Activated T-helper 1 cell treated with anti-CD3 and anti-CD28 coated beads, Interleukin-12 subunit alpha, Interleukin-12 subunit beta, Interleukin-2, Interleukin-4 antibody, amounts not matched to agents 30 ng/mL and 10 ng/mL and 1 ng/mL, durations not matched to agents 14 hours and 24 hours and 36 hours (primary cell): ENCODE measurements at regions of chr17 and their contacts with region 1.

Region 1: DNA sequence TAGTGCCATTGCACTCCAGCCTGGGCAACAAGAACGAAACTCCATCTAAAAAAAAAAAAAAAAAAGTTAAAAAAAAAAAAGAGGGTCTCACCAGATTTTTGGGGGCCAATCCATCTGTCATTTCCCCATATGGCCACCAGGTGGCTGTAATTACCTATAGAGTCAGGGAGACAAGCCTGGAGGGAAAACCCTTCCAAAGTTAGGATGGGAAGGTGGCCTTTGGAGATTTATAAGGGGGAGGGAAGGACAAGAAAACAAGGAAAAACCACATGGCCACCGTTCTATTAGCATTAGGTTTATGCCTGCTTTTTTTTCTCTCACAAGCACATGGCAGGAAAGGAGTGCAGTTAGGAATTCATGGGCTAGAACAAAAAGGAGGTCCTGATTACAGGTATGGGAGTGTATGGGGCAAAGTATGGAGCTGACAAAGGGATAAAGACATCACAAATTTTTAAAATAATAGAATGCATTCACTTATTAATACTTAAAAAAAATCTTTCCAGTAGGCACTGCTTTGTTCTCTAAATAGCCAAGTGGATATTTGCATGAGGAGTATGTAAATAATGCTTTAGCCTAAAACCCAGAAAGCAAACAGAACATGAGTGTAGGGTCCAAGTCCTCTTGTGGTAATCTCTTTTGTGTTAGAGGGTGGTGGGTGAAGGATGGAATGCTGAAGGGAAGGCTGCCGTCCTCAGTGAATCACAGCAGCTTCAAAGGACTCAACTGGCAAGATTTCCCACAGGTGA is 5.1 kb downstream of the CYB5D1 start:
- DNase-seq: no peak
- H3K4me3 Mint-ChIP-seq: no peak overlapping the region
- H3K27ac Mint-ChIP-seq: no peak overlapping the region
- H3K4me1 Mint-ChIP-seq: peaks cover 13% of the 10 kb centered on the region
- H3K27me3 Mint-ChIP-seq: no peaks in the 10 kb centered on the region

Region 2: GRCh38 chr17:7515911-7516610 is 346.8 kb before region 1 on chr17:
- intact Hi-C with region 1: no loop called
- DNase-seq: no peak
- H3K4me3 Mint-ChIP-seq: no peak overlapping the region
- H3K27ac Mint-ChIP-seq: peak overlapping the region; percentile 40
- H3K4me1 Mint-ChIP-seq: no peaks in the 10 kb centered on the region
- H3K27me3 Mint-ChIP-seq: no peaks in the 10 kb centered on the region

Region 3: GRCh38 chr17:7897773-7898172 is 34.9 kb after region 1 on chr17:
- intact Hi-C with region 1: loop called (anchors 1 kb)
- DNase-seq: no peak
- H3K4me3 Mint-ChIP-seq: peak overlapping the region; percentile 3
- H3K27ac Mint-ChIP-seq: peak overlapping the region; percentile 79
- H3K4me1 Mint-ChIP-seq: peaks cover 8% of the 10 kb centered on the region
- H3K27me3 Mint-ChIP-seq: no peaks in the 10 kb centered on the region

Region 4: GRCh38 chr17:7931709-7932482 is 69.0 kb after region 1 on chr17 and contains the starts of genes CNTROB and TRAPPC1:
- intact Hi-C with region 1: no loop called
- DNase-seq: peak; percentile 100
- H3K4me3 Mint-ChIP-seq: peak within 1 kb of the TSS; percentile 99
- H3K27ac Mint-ChIP-seq: peak within 1 kb of the TSS; percentile 99
- H3K4me1 Mint-ChIP-seq: peaks cover 42% of the 10 kb centered on the region
- H3K27me3 Mint-ChIP-seq: no peaks in the 10 kb centered on the region
- total RNA-seq, gene CNTROB: 53.5 and 54.7 TPM in 2 replicates
- total RNA-seq, gene TRAPPC1: 153 and 162 TPM in 2 replicates